ENCODE measurements at regions of chr3 and their contacts with region 1.

Region 1: GRCh38 chr3:11060500-11061251 is 68.1 kb downstream of the SLC6A1 start:
- DNase-seq: peak; percentile 79
- H3K4me3 ChIP-seq: peak overlapping the region; percentile 15
- H3K27ac ChIP-seq: no peak overlapping the region
- H3K4me1 ChIP-seq: peaks cover 9% of the 10 kb centered on the region
- H3K27me3 ChIP-seq: no peaks in the 10 kb centered on the region
- CTCF ChIP-seq: peak; percentile 93

Region 2: DNA sequence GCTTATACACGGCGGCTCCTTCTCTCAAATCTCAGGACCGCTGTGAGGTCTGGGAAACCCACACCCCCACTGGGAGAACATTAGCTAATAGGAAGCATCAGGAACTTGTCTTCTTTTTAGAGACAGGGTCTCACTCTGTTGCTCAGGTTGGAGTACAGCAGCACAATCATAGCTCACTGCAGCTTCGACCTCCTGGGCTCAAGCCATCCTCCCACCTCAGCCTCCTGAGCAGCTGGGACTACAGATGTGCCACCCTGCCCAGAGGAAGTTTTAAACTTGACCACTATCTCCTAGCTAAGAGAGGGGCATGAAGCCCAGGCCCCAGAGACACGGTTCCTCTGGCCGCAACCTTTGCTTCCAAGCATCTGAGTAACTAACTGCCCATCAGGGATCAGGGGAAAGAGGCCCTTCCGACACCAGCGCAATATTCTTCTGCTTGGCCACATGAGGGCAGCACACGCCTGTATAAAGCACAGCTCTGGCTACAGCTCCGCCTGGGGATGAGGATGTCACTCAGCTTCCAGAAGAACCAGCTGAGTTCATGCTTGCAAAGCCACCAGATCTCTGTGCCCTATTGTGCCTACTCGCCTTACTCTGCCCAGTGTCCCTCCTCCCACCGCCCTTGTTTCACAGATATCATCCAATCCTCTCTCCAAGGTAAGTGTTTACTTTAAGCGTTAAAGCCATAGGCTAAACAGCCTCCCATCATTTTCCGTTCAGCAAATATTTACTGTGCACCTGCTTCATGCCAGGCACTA is 302.2 kb before region 1 on chr3:
- CTCF ChIA-PET with region 1: interaction called, 7 read pairs
- POLR2A ChIA-PET with region 1: no interaction called
- intact Hi-C with region 1: loop called (anchors 1 kb)
- DNase-seq: peak; percentile 70
- H3K4me3 ChIP-seq: no peak overlapping the region
- H3K27ac ChIP-seq: no peak overlapping the region
- H3K4me1 ChIP-seq: no peaks in the 10 kb centered on the region
- H3K27me3 ChIP-seq: peaks cover 4% of the 10 kb centered on the region
- CTCF ChIP-seq: peak; percentile 76

Region 3: GRCh38 chr3:10883478-10884234 is 177.0 kb before region 1 on chr3:
- CTCF ChIA-PET with region 1: no interaction called
- POLR2A ChIA-PET with region 1: no interaction called
- intact Hi-C with region 1: loop called (anchors 5 kb)
- DNase-seq: peak; percentile 22
- H3K4me3 ChIP-seq: no peak overlapping the region
- H3K27ac ChIP-seq: no peak overlapping the region
- H3K4me1 ChIP-seq: no peaks in the 10 kb centered on the region
- H3K27me3 ChIP-seq: peaks cover 8% of the 10 kb centered on the region
- CTCF ChIP-seq: peak; percentile 57

Region 4: DNA sequence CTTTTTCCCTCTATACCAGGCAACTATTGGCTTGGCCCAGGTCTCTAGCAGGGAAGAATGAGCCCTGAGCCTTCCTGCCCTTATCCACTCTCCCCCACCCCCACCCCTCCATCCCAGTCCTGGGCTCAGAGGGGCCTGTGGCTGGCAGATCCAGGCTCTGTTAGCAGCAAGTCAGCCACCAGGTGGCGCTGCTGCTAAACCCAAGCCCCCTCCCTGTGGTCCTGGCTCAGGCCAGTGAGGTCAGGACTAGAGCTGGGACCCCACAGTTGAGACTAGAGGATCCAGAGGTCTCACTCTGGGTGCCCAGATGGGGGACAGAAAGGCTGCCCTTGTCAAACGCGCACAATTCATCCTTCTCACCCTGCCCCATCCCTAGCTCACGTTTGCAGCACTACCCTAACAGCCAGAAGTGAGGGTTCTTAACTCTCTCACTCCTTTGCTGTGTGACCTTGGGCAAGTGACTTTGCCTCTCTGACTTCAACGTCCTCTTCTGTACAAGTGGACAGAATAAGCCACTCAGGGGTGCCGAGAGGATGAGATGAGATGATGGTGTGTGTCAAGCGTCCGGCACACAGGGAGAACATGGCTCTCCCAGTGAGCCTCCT is 114.9 kb before region 1 on chr3:
- CTCF ChIA-PET with region 1: interaction called, 15 read pairs
- POLR2A ChIA-PET with region 1: no interaction called
- intact Hi-C with region 1: loop called (anchors 1 kb)
- DNase-seq: peak; percentile 60
- H3K4me3 ChIP-seq: no peak overlapping the region
- H3K27ac ChIP-seq: no peak overlapping the region
- H3K4me1 ChIP-seq: no peaks in the 10 kb centered on the region
- H3K27me3 ChIP-seq: no peaks in the 10 kb centered on the region
- CTCF ChIP-seq: peak; percentile 92